ENCODE measurements at regions of chr2 and their contacts with region 1.

Region 1: DNA sequence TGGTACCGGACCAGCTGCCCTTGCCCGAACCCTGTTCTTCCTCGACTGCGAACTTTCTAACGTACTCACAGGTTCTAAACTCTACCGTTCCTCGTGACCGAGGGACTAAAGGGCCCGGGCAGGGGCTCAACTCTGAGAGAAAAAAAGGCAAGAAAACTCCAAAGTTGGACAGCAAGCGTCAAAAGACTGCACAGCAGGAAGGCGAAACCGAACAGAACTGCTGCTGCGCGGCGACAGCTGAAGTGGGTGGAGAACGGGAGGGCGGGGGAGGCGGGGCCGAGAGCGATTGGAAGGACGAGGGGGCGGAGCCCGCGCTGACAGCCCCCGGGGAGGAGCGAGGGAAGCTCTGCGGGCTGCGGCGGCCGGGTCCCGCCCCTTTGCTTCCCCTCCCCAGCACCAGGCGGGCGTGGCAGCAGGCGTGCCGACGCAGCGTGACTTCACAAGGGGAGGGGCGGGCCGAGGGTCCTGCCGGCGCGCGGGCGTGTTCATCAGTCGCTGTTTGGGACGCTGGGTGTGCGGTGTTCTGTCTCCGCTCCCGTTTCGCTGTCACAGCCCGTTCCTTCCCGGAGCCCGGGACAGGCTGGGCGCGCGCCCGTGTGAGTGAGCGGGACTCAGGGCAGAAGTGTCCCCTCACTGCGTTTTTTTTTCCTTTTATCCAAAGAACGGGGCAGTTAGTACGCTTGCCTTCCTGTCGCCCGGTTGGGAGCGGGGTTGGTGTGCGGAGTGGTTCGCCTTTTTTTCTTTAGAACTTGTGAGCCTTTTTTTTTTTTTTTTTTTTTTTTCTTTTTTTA is at the start of gene NABP1:
- DNase-seq: peak; percentile 94
- H3K4me3 ChIP-seq: peak within 1 kb of the TSS; percentile 79
- H3K27ac ChIP-seq: peak within 1 kb of the TSS; percentile 99
- H3K27me3 ChIP-seq: no peaks in the 10 kb centered on the region
- CTCF ChIP-seq: no peak
- polyA plus RNA-seq, gene NABP1: 138 and 204 TPM in 2 replicates

Region 2: GRCh38 chr2:191582355-191582754 is 95.5 kb before region 1 on chr2:
- CTCF ChIA-PET with region 1: no interaction called
- POLR2A ChIA-PET with region 1: interaction called, 16 read pairs
- DNase-seq: peak; percentile 36
- H3K4me3 ChIP-seq: no peak overlapping the region
- H3K27ac ChIP-seq: no peak overlapping the region
- H3K27me3 ChIP-seq: no peaks in the 10 kb centered on the region
- CTCF ChIP-seq: no peak

Region 3: GRCh38 chr2:191625016-191625415 is 52.8 kb before region 1 on chr2:
- CTCF ChIA-PET with region 1: no interaction called
- POLR2A ChIA-PET with region 1: interaction called, 19 read pairs
- DNase-seq: no peak
- H3K4me3 ChIP-seq: no peak overlapping the region
- H3K27ac ChIP-seq: peak overlapping the region; percentile 22
- H3K27me3 ChIP-seq: no peaks in the 10 kb centered on the region
- CTCF ChIP-seq: no peak

Region 4: DNA sequence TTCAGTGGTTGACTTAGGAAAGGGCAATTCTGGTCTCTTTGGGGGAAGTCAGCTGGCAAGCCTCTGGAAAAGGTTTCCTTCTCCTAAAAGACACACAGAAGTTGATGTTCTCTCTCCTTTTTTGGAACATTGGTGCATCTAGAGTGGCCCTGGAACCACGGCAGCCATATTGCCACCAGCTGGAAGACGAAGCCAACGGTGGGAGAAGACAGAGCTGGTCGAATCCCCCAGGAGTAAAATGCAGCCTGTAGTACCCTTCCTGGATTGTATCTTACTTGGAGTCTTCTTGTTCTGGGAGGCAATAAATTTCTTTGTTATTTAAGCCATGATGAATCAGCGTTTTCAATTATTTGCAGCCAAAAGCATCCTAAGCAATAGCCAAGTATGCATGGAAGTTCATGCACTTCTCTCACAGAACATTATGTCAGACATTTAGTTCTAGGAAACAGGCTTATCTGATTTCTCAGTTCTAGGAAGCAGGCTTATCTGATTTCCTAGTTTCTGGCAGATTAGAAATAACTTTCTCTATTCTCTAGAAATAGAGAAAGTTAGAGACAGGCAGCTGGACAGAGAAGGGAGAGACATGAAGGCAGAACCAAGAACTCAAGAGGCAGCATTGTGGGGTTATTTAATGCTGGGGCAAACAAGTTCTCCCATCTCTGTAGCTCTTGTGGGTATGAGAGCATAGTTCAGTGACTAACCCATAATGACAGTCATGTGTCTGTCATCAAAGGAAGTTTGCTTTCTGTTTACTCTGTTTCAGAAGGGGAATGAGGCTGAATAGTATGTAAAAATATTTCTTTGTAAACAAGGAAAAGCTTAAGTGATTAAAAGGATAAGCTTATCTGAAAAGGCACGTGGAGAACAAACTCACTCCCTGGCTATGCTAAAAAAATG is 40.4 kb before region 1 on chr2:
- CTCF ChIA-PET with region 1: no interaction called
- POLR2A ChIA-PET with region 1: interaction called, 116 read pairs
- DNase-seq: no peak
- H3K4me3 ChIP-seq: no peak overlapping the region
- H3K27ac ChIP-seq: peak overlapping the region; percentile 71
- H3K27me3 ChIP-seq: no peaks in the 10 kb centered on the region
- CTCF ChIP-seq: no peak

Region 5: GRCh38 chr2:191666732-191667131 is 11.1 kb before region 1 on chr2:
- CTCF ChIA-PET with region 1: interaction called, 3 read pairs
- POLR2A ChIA-PET with region 1: interaction called, 41 read pairs
- DNase-seq: no peak
- H3K4me3 ChIP-seq: no peak overlapping the region
- H3K27ac ChIP-seq: peak overlapping the region; percentile 63
- H3K27me3 ChIP-seq: no peaks in the 10 kb centered on the region
- CTCF ChIP-seq: no peak